ENCODE measurements at regions of chr5 and their contacts with region 1.

Region 1: DNA sequence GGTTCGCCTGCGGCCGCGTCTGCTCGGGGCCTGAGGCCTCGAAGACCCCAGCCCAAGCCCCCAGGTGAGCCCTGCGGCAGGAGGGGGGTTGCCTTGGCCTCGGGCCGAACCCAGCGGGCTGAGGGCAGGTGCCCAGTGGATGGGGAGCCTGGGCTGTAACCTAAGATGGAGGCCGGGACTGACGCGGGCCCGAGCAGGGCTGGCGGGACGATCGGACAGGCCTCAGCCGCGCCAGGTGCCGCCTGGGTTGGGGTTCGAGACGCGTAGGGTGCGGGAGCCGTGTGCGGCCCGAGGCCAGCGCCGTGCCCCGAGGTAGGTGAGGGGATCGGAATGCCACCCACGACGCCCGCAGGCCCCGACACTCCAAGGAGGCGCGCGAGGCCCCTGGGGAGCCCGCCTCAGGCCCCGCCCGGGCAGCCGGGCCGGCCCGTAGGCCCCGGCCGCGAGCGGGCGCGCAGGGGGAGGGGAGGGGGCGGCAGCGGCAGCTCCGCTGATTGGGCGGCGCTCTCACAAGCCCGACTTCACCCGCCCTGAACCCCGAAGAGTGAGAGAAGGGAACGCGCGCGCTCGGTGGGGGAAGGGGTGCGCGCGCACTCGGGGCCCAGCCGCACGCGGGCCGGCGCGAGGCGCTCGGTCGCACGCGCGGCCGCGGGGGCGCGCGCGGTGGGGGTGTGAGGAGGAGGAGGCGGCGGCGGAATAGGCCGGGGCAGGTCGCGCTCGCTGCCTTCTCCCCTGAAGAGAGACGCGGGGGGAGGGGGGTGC is at the start of gene NSD1:
- DNase-seq: peak; percentile 90 to 95 (median 90)
- ATAC-seq: peak; percentile 62 to 85 (median 84)
- H3K4me3 ChIP-seq: peak within 1 kb of the TSS; percentile 59 to 88 (median 76)
- H3K27ac ChIP-seq: peak within 1 kb of the TSS; percentile 83 to 98 (median 94)
- H3K4me1 ChIP-seq: peaks cover 4 to 60% (median 41%) of the 10 kb centered on the region in 12 donors
- H3K27me3 ChIP-seq: no peaks in the 10 kb centered on the region
- CTCF ChIP-seq: no peak
- POLR2A ChIP-seq: peak in 1 of 2 donors; percentile 57
- total RNA-seq, gene NSD1: 25.8 to 64.6 (median 47.8) TPM

Region 2: GRCh38 chr5:177303121-177303924 is 170.1 kb after region 1 on chr5 and contains the starts of genes PRELID1 and RAB24:
- intact Hi-C with region 1: loop called in 1 of 10 experiments (anchors 5 kb)
- DNase-seq: peak; percentile 87 to 94 (median 91)
- ATAC-seq: peak; percentile 49 to 84 (median 76)
- H3K4me3 ChIP-seq: peak within 1 kb of the TSS; percentile 76 to 100 (median 94)
- H3K27ac ChIP-seq: peak within 1 kb of the TSS; percentile 73 to 96 (median 88)
- H3K4me1 ChIP-seq: peaks cover 0 to 87% (median 46%) of the 10 kb centered on the region in 12 donors
- H3K27me3 ChIP-seq: no peaks in the 10 kb centered on the region
- CTCF ChIP-seq: peak in 10 of 12 donors; percentile 12 to 64 (median 38)
- POLR2A ChIP-seq: peak in 1 of 2 donors; percentile 82
- total RNA-seq, gene PRELID1: 30.3 to 80.6 (median 42.4) TPM
- total RNA-seq, gene RAB24: 11.6 to 27.5 (median 18.9) TPM